ENCODE measurements at regions of chr18 and their contacts with region 1.

Region 1: GRCh38 chr18:35949903-35950627 is 22.4 kb upstream of the RMP24 start:
- DNase-seq: peak; percentile 67
- H3K4me3 ChIP-seq: peak overlapping the region; percentile 32 to 66 (median 39)
- H3K27ac ChIP-seq: no peak overlapping the region
- H3K4me1 ChIP-seq: peaks cover 3% of the 10 kb centered on the region
- H3K27me3 ChIP-seq: peaks cover 0 to 4% of the 10 kb centered on the region in 2 experiments
- CTCF ChIP-seq: peak; percentile 80 to 82
- POLR2A ChIP-seq: no peak

Region 2: DNA sequence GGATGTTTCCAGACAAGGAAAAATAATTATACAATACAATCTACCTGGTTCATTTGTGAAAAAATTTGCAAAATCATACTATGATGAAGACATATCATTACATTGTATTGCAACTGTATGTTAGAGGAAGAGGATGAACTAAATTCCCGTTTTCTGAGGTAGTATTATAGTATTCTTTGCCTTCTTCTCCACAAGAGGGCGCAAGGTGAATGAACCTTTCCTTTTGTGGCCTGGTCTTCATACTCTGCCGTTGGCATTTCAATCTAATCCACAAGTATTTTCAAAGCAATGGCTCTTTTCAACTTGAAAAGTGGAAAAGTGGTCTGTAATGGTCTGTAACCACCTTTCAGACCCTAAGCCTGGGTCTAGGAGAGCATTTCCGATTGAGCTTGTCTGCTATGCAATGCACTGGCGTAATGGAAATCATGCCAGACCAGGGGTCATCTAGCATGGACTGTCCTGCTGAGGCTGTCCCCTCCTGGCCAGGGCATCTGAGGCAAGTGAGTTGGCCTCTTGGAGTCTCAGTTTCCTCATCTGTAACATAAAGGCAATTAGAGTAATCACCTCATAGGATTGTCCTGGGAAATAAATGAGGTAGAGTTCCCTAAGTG is 542.1 kb before region 1 on chr18:
- CTCF ChIA-PET with region 1: interaction called, 4 read pairs
- POLR2A ChIA-PET with region 1: no interaction called
- dilution Hi-C with region 1: no loop called
- intact Hi-C with region 1: loop called (anchors 1 kb)
- DNase-seq: peak; percentile 80
- H3K4me3 ChIP-seq: no peak overlapping the region
- H3K27ac ChIP-seq: peak overlapping the region; percentile 34
- H3K4me1 ChIP-seq: peaks cover 4% of the 10 kb centered on the region
- H3K27me3 ChIP-seq: no peaks in the 10 kb centered on the region
- CTCF ChIP-seq: peak; percentile 58 to 69
- POLR2A ChIP-seq: no peak

Region 3: GRCh38 chr18:35756506-35757117 is 193.5 kb before region 1 on chr18:
- CTCF ChIA-PET with region 1: interaction called, 93 read pairs
- POLR2A ChIA-PET with region 1: no interaction called
- dilution Hi-C with region 1: no loop called
- intact Hi-C with region 1: loop called (anchors 1 kb)
- DNase-seq: peak; percentile 63
- H3K4me3 ChIP-seq: no peak overlapping the region
- H3K27ac ChIP-seq: no peak overlapping the region
- H3K4me1 ChIP-seq: no peaks in the 10 kb centered on the region
- H3K27me3 ChIP-seq: peaks cover 3 to 6% of the 10 kb centered on the region in 2 experiments
- CTCF ChIP-seq: peak; percentile 58 to 75
- POLR2A ChIP-seq: no peak

Region 4: GRCh38 chr18:35934002-35934401 is 16.1 kb before region 1 on chr18:
- CTCF ChIA-PET with region 1: interaction called, 68 read pairs
- POLR2A ChIA-PET with region 1: no interaction called
- dilution Hi-C with region 1: no loop called
- intact Hi-C with region 1: no loop called
- DNase-seq: no peak
- H3K4me3 ChIP-seq: no peak overlapping the region
- H3K27ac ChIP-seq: no peak overlapping the region
- H3K4me1 ChIP-seq: no peaks in the 10 kb centered on the region
- H3K27me3 ChIP-seq: peaks cover 0 to 4% of the 10 kb centered on the region in 2 experiments
- CTCF ChIP-seq: no peak
- POLR2A ChIP-seq: no peak

Region 5: DNA sequence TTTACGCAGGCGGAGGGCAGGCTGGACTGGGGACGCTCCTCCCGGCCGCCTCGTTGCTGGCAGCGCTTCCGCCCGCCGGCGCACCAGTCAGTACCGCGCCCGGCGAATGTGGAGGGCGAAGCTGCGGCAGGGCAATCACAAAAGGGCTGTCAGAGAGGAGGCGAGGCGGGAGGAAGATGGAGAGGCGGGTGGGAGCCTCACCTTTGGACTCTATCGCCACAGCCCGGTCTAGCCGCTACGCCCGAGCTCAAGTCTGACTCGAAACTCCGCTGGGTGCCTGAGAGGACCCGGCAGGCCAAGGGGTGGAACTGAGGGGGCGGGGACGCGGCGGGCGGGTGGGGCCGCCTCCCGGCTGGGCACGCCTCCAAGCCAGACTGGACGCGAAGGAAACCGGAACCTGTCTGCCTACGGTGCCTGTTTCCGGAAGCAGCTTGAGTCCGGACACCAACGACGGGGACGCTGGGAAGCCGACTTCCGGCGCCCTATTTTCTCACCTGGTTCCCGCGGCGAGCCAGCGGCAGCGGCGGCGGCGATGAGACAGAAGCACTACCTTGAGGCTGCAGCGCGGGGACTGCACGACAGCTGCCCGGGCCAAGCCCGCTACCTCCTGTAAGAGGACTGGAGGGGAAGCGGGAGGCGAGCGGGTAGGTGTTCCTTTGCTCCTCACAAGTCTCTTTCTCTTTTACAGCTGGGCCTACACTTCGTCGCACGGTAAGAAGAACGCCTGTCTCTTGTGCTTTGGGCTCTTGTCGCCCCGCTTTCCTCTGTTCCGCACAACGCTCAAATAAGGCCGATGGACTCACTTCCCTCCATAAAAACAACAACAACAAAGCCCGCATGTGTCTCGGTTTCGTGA is 22.4 kb after region 1 on chr18 and contains the start of gene RMP24:
- CTCF ChIA-PET with region 1: interaction called, 9 read pairs
- POLR2A ChIA-PET with region 1: no interaction called
- dilution Hi-C with region 1: no loop called
- intact Hi-C with region 1: loop called (anchors 1 kb)
- DNase-seq: peak; percentile 89
- H3K4me3 ChIP-seq: peak within 1 kb of the TSS; percentile 83 to 99 (median 91)
- H3K27ac ChIP-seq: peak within 1 kb of the TSS; percentile 91
- H3K4me1 ChIP-seq: peaks cover 18% of the 10 kb centered on the region
- H3K27me3 ChIP-seq: peaks cover 4% of the 10 kb centered on the region in 2 experiments
- CTCF ChIP-seq: no peak
- POLR2A ChIP-seq: peak; percentile 78

Region 6: DNA sequence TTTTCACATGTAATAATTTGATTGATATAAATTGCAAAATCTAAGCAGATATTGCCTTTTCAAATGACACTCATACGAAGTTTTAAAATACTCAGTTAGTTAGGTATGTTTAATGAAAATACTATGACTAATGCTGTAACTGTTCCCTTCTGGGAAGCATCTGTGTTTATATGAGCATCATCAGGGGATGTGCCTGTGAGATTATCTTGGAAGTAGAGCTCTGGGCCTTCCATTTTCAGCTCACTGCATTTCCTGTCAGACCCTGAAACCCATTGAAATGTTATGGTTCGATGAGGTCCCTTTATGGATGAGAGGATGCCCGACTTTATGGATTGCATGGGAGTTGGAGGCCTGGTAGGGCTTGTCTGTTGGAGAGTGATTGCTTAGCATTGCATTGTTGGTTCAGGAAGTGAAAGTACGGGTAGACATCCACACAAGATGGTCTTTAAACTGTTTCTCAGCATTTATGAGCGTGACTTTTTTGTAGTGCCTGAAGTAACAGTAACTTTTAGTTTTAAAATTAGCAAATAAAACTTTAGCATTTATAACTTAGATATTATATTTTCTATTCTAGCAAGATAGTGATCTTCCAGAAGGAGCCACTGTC is 208.3 kb after region 1 on chr18:
- CTCF ChIA-PET with region 1: no interaction called
- POLR2A ChIA-PET with region 1: no interaction called
- dilution Hi-C with region 1: no loop called
- intact Hi-C with region 1: no loop called
- DNase-seq: peak; percentile 93
- H3K4me3 ChIP-seq: no peak overlapping the region
- H3K27ac ChIP-seq: peak overlapping the region; percentile 74
- H3K4me1 ChIP-seq: peaks cover 34% of the 10 kb centered on the region
- H3K27me3 ChIP-seq: no peaks in the 10 kb centered on the region
- CTCF ChIP-seq: no peak
- POLR2A ChIP-seq: peak; percentile 49

Measured in endothelial cell of umbilical vein (primary cell).